Natural killer cell (primary cell): ENCODE measurements at regions of chr6 and their contacts with region 1.

Region 1: GRCh38 chr6:30541515-30542403 is 14.5 kb downstream of the GNL1 start:
- DNase-seq: peak; percentile 76 to 94
- ATAC-seq: peak; percentile 72 to 83 (median 72)
- H3K4me3 ChIP-seq: peak overlapping the region; percentile 4
- H3K4me3 Mint-ChIP-seq: peak overlapping the region; percentile 86
- H3K27ac ChIP-seq: peak overlapping the region; percentile 32
- H3K27ac Mint-ChIP-seq: peak overlapping the region; percentile 69 to 81
- H3K4me1 ChIP-seq: peaks cover 30% of the 10 kb centered on the region
- H3K4me1 Mint-ChIP-seq: peaks cover 32 to 34% of the 10 kb centered on the region in 2 donors
- H3K27me3 ChIP-seq: no peaks in the 10 kb centered on the region
- H3K27me3 Mint-ChIP-seq: no peaks in the 10 kb centered on the region
- CTCF ChIP-seq: peak; percentile 94

Region 2: GRCh38 chr6:30515932-30516753 is 25.6 kb before region 1 on chr6:
- intact Hi-C with region 1: no loop called
- DNase-seq: peak; percentile 76 to 97
- ATAC-seq: peak; percentile 88 to 93 (median 88)
- H3K4me3 ChIP-seq: peak overlapping the region; percentile 47
- H3K4me3 Mint-ChIP-seq: peak overlapping the region; percentile 89
- H3K27ac ChIP-seq: peak overlapping the region; percentile 94
- H3K27ac Mint-ChIP-seq: peak overlapping the region; percentile 93 to 96
- H3K4me1 ChIP-seq: peaks cover 46% of the 10 kb centered on the region
- H3K4me1 Mint-ChIP-seq: peaks cover 37 to 38% of the 10 kb centered on the region in 2 donors
- H3K27me3 ChIP-seq: no peaks in the 10 kb centered on the region
- H3K27me3 Mint-ChIP-seq: no peaks in the 10 kb centered on the region
- CTCF ChIP-seq: no peak

Region 3: DNA sequence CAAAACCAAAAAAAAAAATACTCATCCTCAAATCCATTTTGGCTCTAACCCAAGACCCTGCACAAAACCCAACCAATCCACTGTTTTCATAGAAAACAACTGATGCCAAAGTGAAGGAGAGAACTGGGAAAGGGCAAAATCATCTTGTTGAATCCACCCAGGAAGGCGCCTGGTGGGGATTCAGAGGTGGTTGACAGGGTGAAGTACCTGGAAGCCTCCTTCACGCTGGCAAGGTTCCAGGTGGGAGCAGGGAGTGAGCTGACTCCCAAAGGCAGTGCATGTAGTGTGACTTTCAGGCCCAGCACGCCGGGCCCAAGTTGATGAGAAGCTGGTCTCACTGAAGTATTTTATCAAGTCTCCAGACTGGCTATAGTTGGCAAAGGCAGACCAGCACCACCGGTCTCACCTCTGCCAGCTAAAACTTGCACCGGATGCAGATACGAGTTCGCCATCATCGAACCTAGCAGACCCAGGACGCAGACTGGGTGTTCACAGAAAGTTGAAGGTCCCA is 58.7 kb after region 1 on chr6:
- intact Hi-C with region 1: loop called (anchors 1 kb)
- DNase-seq: no peak
- ATAC-seq: no peak
- H3K4me3 ChIP-seq: no peak overlapping the region
- H3K4me3 Mint-ChIP-seq: peak overlapping the region; percentile 32
- H3K27ac ChIP-seq: peak overlapping the region; percentile 51
- H3K27ac Mint-ChIP-seq: peak overlapping the region; percentile 70 to 73
- H3K4me1 ChIP-seq: peaks cover 33% of the 10 kb centered on the region
- H3K4me1 Mint-ChIP-seq: peaks cover 37 to 40% of the 10 kb centered on the region in 2 donors
- H3K27me3 ChIP-seq: no peaks in the 10 kb centered on the region
- H3K27me3 Mint-ChIP-seq: no peaks in the 10 kb centered on the region
- CTCF ChIP-seq: no peak